Mammary epithelial cell (primary cell): ENCODE measurements at regions of chr4 and their contacts with region 1.

Region 1: DNA sequence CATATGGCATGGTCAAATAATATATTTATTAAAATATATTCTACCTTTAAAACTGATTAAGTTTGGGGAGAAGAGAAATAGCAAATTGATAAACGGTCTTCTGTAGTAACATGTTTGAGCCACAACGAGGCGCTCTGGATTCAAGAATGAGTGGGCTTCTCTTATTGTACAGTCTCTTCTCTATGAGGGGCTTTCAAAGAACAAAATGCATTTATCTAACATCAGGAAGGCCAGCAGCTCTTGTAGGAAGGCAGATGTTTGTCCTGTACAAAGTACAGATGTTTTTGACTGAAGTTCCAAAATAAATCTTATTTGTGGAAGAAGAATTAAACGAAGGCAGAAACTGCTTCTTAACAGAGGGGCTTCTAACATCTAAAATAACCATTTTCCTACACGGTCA is 153.6 kb downstream of the RASL11B start:
- DNase-seq: no peak
- H3K4me3 ChIP-seq: no peak overlapping the region
- H3K27ac ChIP-seq: no peak overlapping the region
- H3K4me1 ChIP-seq: no peaks in the 10 kb centered on the region
- H3K27me3 ChIP-seq: no peaks in the 10 kb centered on the region
- CTCF ChIP-seq: peak; percentile 59 to 64

Region 2: DNA sequence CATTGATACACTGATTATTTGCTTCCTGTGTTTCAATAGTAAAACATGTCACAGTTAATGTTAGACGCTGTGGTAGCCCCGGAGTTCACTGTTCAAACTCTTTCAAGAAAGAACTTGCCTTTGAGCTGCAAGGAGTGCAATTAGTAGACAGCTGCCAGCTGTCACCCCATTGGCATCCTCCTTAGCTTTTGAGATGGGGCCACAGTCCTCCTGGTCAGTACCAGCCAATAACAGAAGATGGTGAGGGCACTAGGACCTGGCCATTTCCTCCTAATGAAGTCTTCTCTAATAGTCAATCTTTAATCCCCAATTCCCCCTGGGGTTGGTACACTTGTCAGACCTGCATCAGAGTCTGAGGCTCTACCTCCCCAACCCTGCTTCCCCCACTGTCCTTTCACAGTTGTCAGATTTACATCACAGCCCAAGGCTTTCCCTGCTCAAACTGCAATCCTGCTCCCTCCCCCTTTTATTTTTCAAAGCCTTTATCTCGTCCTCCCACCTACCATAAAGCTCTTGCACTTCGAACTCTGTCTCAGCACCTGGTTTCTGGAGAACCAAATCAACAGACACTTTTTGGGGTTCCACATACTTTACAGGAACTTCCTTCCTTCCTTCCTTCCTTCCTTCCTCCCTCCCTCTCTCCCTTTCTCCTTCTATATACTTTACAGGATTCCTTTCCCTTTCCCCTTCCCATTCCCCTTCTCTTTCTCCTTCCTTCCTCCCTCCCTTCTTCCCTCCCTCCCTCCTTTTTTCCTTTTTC is 28.4 kb after region 1 on chr4:
- CTCF ChIA-PET with region 1: interaction called, 19 read pairs
- dilution Hi-C with region 1: no loop called
- in situ Hi-C with region 1: no loop called
- intact Hi-C with region 1: no loop called
- DNase-seq: no peak
- H3K4me3 ChIP-seq: no peak overlapping the region
- H3K27ac ChIP-seq: no peak overlapping the region
- H3K4me1 ChIP-seq: no peaks in the 10 kb centered on the region
- H3K27me3 ChIP-seq: no peaks in the 10 kb centered on the region
- CTCF ChIP-seq: no peak

Region 3: GRCh38 chr4:53377319-53378170 is 361.9 kb after region 1 on chr4 and contains the start of gene FIP1L1:
- CTCF ChIA-PET with region 1: no interaction called
- dilution Hi-C with region 1: no loop called
- in situ Hi-C with region 1: no loop called
- intact Hi-C with region 1: loop called (anchors 5 kb)
- DNase-seq: peak; percentile 85
- H3K4me3 ChIP-seq: peak within 1 kb of the TSS; percentile 71 to 93 (median 88)
- H3K27ac ChIP-seq: peak within 1 kb of the TSS; percentile 70
- H3K4me1 ChIP-seq: no peaks in the 10 kb centered on the region
- H3K27me3 ChIP-seq: no peaks in the 10 kb centered on the region
- CTCF ChIP-seq: peak in 1 of 2 donors; percentile 3
- total RNA-seq, gene FIP1L1: 42.3 to 70.8 TPM

Region 4: GRCh38 chr4:53804719-53805118 is 789.0 kb after region 1 on chr4:
- CTCF ChIA-PET with region 1: no interaction called
- dilution Hi-C with region 1: no loop called
- in situ Hi-C with region 1: no loop called
- intact Hi-C with region 1: loop called (anchors 10 kb)
- DNase-seq: peak; percentile 17
- H3K4me3 ChIP-seq: no peak overlapping the region
- H3K27ac ChIP-seq: no peak overlapping the region
- H3K4me1 ChIP-seq: no peaks in the 10 kb centered on the region
- H3K27me3 ChIP-seq: no peaks in the 10 kb centered on the region
- CTCF ChIP-seq: peak; percentile 81 to 83